Left ventricle myocardium inferior (tissue), 1 donor: ENCODE measurements at regions of chr17 and their contacts with region 1.

Region 1: GRCh38 chr17:29219378-29220047 is 27.1 kb upstream of the CRYBA1 start:
- DNase-seq: peak; percentile 66
- H3K4me3 ChIP-seq: no peak overlapping the region
- H3K27ac ChIP-seq: no peak overlapping the region
- H3K4me1 ChIP-seq: peaks cover 9% of the 10 kb centered on the region
- H3K27me3 ChIP-seq: no peaks in the 10 kb centered on the region
- CTCF ChIP-seq: peak; percentile 94

Region 2: DNA sequence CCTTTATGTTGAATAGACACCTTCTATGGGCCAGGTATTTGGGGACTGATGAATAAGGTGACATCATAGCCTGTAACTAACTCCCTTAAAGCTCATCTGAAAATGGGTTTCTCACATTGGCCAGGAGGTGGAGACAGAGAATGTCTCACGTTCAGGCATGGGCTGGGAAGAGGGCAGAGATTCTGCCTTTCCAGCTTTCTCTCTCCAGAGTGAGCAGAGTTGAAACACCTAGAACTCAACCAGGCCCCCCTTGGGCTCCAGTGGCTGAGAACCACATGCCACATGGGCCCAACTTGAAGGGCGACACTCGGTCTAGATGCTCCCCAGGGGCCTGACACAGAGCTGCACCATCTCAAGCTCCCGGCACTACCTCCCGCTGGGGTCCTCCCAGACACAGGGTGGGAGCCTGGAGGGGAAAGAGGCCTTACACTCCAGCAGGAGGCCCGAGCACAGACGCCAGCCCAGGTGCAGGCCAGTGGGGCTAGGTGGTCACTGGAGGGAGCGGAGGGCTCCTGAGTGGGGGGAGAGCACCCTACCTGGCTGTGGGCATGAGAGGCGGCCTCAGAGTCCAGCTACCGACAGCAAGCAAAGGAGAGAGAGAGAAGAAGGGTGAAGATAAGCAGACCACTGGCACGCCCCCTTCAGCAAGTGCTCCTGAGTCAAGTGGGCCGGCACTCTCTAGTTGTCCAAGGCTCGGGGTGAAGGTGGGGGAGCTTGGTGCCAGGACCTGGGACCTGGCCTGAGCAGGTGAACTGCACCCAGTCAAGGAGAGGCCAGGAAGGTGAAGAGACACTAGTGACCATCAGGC is 95.2 kb before region 1 on chr17:
- intact Hi-C with region 1: loop called (anchors 1 kb)
- DNase-seq: no peak
- H3K4me3 ChIP-seq: no peak overlapping the region
- H3K27ac ChIP-seq: peak overlapping the region; percentile 66
- H3K4me1 ChIP-seq: peaks cover 56% of the 10 kb centered on the region
- H3K27me3 ChIP-seq: no peaks in the 10 kb centered on the region
- CTCF ChIP-seq: peak; percentile 75

Region 3: DNA sequence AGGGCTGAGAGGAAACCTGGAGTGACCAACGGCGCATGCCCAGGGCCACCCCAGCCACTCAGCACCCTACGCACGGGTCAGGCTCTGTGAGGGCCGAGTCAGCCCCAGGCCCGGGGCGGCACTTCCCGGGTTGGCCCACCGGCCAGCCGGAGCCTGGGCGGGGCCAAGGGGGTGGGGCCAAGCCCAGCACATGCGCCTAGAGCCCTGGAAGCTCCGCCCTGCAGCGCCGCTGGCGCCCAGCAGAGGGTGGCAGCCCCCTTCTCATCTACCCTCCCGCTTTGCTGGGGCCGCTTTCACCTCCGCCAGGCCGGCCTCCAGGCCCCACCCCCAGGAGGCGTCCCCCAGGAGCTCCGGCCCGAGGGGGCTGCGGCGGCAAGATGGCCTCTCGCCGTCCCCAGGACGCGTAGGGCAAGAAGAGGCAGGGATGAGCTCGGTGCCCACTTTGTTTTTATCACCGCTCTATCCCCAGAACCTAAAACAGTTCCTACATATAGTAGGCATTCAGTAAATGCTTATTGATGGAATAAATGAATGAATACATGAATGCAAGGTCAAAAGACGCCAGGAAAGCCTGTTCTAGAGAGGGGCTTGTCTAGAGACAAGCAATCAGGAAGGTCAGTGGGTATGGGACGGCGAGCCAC is 70.6 kb before region 1 on chr17:
- intact Hi-C with region 1: loop called (anchors 5 kb)
- DNase-seq: peak; percentile 95
- H3K4me3 ChIP-seq: peak overlapping the region; percentile 70
- H3K27ac ChIP-seq: peak overlapping the region; percentile 81
- H3K4me1 ChIP-seq: peaks cover 64% of the 10 kb centered on the region
- H3K27me3 ChIP-seq: no peaks in the 10 kb centered on the region
- CTCF ChIP-seq: peak; percentile 99

Region 4: GRCh38 chr17:29190039-29190438 is 29.5 kb before region 1 on chr17:
- intact Hi-C with region 1: no loop called
- DNase-seq: no peak
- H3K4me3 ChIP-seq: no peak overlapping the region
- H3K27ac ChIP-seq: no peak overlapping the region
- H3K4me1 ChIP-seq: no peaks in the 10 kb centered on the region
- H3K27me3 ChIP-seq: no peaks in the 10 kb centered on the region
- CTCF ChIP-seq: no peak

Region 5: DNA sequence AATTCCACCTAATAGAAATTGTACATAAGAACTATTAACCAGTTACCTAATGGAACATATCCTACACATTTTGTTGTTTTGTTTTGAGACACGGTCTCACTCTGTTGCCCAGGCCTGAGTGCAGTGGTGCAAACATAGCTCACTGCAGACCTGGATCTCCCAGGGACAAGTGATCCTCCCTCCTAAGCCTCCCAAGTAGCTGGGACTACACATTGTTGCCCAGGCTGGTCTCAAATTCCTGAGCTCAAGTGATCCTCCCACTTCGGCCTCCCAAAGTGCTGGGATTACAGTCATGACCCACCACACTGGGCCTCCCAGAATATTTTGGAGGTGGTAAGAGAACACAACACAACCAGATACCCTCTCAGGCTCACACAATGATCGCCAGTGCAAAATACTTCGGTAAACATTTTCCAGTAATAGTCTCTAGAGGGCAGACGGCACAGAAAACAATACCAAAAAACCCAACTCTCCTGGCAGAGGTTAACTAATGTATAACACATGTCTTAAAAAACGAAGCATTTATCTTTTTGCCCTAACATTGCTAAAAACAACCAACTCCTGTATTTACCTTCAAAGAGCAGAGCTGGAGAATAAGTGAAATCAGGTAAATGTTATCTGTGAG is 63.9 kb after region 1 on chr17:
- intact Hi-C with region 1: no loop called
- DNase-seq: no peak
- H3K4me3 ChIP-seq: peak overlapping the region; percentile 11
- H3K27ac ChIP-seq: peak overlapping the region; percentile 0
- H3K4me1 ChIP-seq: peaks cover 78% of the 10 kb centered on the region
- H3K27me3 ChIP-seq: no peaks in the 10 kb centered on the region
- CTCF ChIP-seq: no peak